Common myeloid progenitor, CD34-positive (primary cell): ENCODE measurements at regions of chr3 and their contacts with region 1.

Region 1: DNA sequence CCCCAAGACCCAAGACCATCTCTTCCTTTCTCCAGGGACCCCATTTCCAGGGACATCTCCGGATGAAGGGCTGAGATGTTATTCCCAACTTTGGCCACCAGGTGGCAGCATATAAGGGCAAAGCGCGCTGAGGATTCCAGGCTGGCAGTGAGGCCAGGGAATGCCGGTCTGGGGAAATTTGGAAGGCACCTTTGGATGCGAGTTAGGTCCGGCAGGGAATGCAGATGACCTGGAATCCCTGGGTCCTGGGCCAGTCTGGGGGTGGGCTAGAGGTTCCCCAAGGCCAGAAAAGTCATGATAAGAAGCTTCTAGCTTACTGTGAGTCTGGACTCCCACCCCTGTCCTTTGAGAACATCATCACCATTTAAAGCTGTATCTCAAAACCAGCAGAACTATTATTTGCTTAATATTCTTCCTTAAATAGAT is 1.6 kb upstream of the CHST13 start:
- DNase-seq: peak in 2 of 3 donors; percentile 42 to 51
- H3K4me3 ChIP-seq: peak overlapping the region in 3 of 7 experiments; percentile 29 to 52 (median 47)
- H3K27ac ChIP-seq: no peak overlapping the region
- H3K4me1 ChIP-seq: peaks cover 0 to 54% (median 47%) of the 10 kb centered on the region in 4 experiments
- H3K27me3 ChIP-seq: no peaks in the 10 kb centered on the region

Region 2: GRCh38 chr3:126056681-126057546 is 465.5 kb before region 1 on chr3:
- CTCF ChIA-PET with region 1: no interaction called
- POLR2A ChIA-PET with region 1: no interaction called
- DNase-seq: no peak
- H3K4me3 ChIP-seq: no peak overlapping the region
- H3K27ac ChIP-seq: no peak overlapping the region
- H3K4me1 ChIP-seq: peaks cover 0 to 12% (median 11%) of the 10 kb centered on the region in 4 experiments
- H3K27me3 ChIP-seq: no peaks in the 10 kb centered on the region

Region 3: GRCh38 chr3:126357295-126358037 is 164.9 kb before region 1 on chr3 and contains the start of gene KLF15:
- CTCF ChIA-PET with region 1: no interaction called
- POLR2A ChIA-PET with region 1: no interaction called
- DNase-seq: peak; percentile 63 to 80 (median 76)
- H3K4me3 ChIP-seq: peak within 1 kb of the TSS; percentile 4 to 70 (median 58)
- H3K27ac ChIP-seq: no peak within 1 kb of the TSS
- H3K4me1 ChIP-seq: peaks cover 0 to 22% (median 18%) of the 10 kb centered on the region in 4 experiments
- H3K27me3 ChIP-seq: peaks cover 10 to 79% (median 35%) of the 10 kb centered on the region in 5 experiments

Region 4: DNA sequence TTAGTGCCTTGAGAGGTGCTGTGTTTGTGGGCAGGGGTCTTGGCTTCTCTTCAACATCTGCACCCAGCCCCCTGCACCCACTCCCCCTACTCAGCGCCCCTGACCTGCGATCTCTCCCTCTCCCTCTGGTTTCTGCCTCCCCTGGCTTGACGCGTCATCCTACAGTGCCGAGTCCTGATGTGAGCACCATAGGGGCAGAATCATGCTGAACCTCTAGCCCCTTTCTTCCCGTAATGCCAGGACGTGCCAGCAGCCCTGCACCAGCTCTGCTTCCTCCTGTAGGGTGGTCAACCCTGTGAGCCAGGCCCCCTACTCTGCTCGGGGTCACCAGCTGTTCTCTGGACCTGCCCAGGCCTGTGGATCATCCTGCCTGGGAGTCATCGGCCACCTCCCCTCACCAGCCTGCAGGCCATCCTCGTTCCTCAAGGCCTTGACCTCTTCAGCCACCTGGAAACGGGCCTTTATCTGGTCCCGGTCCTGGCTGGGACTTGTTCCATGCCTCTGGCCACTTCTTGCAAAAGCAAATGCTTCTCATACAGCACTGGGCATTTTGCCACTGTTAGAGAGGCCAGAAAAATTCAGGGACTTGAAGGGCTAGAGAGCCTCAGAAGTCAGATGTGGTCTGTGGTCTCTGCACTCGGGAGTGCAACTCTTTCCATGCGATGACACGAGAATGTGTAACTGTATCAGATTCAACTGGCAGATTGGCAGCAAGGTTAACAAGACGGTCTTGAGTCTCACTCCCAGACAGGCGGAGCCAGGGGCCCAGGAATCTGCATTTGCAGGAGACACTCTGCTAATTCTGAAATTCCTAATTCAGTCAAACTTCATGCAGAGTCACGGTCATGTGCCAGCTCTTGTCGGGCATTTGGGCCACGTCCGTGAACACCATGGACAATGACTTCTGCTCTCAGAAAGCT is 148.4 kb before region 1 on chr3:
- CTCF ChIA-PET with region 1: no interaction called
- POLR2A ChIA-PET with region 1: no interaction called
- DNase-seq: no peak
- H3K4me3 ChIP-seq: no peak overlapping the region
- H3K27ac ChIP-seq: no peak overlapping the region
- H3K4me1 ChIP-seq: peaks cover 0 to 7% (median under 1%) of the 10 kb centered on the region in 4 experiments
- H3K27me3 ChIP-seq: peaks cover 0 to 3% (median 0%) of the 10 kb centered on the region in 5 experiments

Region 5: DNA sequence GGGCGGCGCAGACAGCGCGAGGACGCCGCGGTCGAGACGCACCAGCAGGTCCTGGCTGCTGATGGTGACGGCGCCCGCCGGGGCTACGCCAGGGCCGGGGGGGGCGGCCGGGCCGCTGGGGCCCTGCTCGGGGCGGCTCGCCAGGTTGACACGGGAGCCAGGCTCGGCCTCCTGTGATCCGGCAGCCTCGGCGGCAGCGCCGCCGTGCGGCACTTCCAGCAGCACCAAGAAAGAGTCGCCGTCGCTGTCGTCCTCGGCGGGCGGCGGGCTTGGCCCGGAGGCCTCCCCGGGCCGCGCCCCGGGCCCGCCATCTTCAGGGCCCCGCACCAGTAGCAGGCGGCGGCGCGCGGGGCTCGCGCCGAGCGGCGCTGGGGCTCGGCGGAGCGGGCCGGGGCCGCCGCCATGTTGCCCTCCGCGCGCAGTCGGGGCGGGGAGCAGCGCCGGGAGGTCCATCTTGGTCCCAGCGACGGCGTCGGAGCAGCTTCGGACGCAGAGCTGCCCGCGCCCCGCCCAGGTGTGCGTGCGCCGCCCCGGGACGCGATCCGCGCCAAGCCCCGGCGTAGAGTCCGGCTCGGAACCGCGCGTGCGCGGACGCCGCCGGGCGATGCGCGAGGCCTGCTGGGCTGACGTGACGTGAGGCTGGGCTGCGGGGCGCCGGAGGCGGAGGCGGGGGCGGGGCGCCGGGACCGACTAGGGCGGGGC is 46.8 kb before region 1 on chr3 and contains the start of gene ZXDC:
- CTCF ChIA-PET with region 1: interaction called, 11 read pairs
- POLR2A ChIA-PET with region 1: no interaction called
- DNase-seq: peak; percentile 88 to 92 (median 92)
- H3K4me3 ChIP-seq: peak within 1 kb of the TSS; percentile 54 to 89 (median 77)
- H3K27ac ChIP-seq: peak within 1 kb of the TSS; percentile 50 to 73
- H3K4me1 ChIP-seq: peaks cover 25 to 44% (median 43%) of the 10 kb centered on the region in 4 experiments
- H3K27me3 ChIP-seq: no peaks in the 10 kb centered on the region

Region 6: GRCh38 chr3:126509597-126510307 is 12.6 kb before region 1 on chr3:
- CTCF ChIA-PET with region 1: interaction called, 15 read pairs
- POLR2A ChIA-PET with region 1: no interaction called
- DNase-seq: no peak
- H3K4me3 ChIP-seq: no peak overlapping the region
- H3K27ac ChIP-seq: no peak overlapping the region
- H3K4me1 ChIP-seq: peaks cover 1 to 15% (median 3%) of the 10 kb centered on the region in 4 experiments
- H3K27me3 ChIP-seq: no peaks in the 10 kb centered on the region

Region 7: GRCh38 chr3:126537730-126538281 is 15.4 kb after region 1 on chr3:
- CTCF ChIA-PET with region 1: interaction called, 21 read pairs
- POLR2A ChIA-PET with region 1: interaction called, 5 read pairs
- DNase-seq: no peak
- H3K4me3 ChIP-seq: no peak overlapping the region
- H3K27ac ChIP-seq: no peak overlapping the region
- H3K4me1 ChIP-seq: peaks cover 7 to 68% (median 62%) of the 10 kb centered on the region in 4 experiments
- H3K27me3 ChIP-seq: no peaks in the 10 kb centered on the region

Region 8: GRCh38 chr3:126544596-126545281 is 22.4 kb after region 1 on chr3:
- CTCF ChIA-PET with region 1: interaction called, 21 read pairs
- POLR2A ChIA-PET with region 1: interaction called, 5 read pairs
- DNase-seq: no peak
- H3K4me3 ChIP-seq: no peak overlapping the region
- H3K27ac ChIP-seq: no peak overlapping the region
- H3K4me1 ChIP-seq: peaks cover 2 to 82% (median 72%) of the 10 kb centered on the region in 4 experiments
- H3K27me3 ChIP-seq: no peaks in the 10 kb centered on the region

Region 9: GRCh38 chr3:126551121-126552071 is 29.0 kb after region 1 on chr3:
- CTCF ChIA-PET with region 1: interaction called, 19 read pairs
- POLR2A ChIA-PET with region 1: no interaction called
- DNase-seq: peak in 2 of 3 donors; percentile 46 to 57
- H3K4me3 ChIP-seq: no peak overlapping the region
- H3K27ac ChIP-seq: no peak overlapping the region
- H3K4me1 ChIP-seq: peaks cover 0 to 40% (median 37%) of the 10 kb centered on the region in 4 experiments
- H3K27me3 ChIP-seq: no peaks in the 10 kb centered on the region

Region 10: GRCh38 chr3:126613479-126614188 is 91.3 kb after region 1 on chr3:
- CTCF ChIA-PET with region 1: interaction called, 36 read pairs
- POLR2A ChIA-PET with region 1: no interaction called
- DNase-seq: peak; percentile 38 to 55 (median 53)
- H3K4me3 ChIP-seq: no peak overlapping the region
- H3K27ac ChIP-seq: no peak overlapping the region
- H3K4me1 ChIP-seq: peaks cover 0 to 18% (median 14%) of the 10 kb centered on the region in 4 experiments
- H3K27me3 ChIP-seq: no peaks in the 10 kb centered on the region

Region 11: DNA sequence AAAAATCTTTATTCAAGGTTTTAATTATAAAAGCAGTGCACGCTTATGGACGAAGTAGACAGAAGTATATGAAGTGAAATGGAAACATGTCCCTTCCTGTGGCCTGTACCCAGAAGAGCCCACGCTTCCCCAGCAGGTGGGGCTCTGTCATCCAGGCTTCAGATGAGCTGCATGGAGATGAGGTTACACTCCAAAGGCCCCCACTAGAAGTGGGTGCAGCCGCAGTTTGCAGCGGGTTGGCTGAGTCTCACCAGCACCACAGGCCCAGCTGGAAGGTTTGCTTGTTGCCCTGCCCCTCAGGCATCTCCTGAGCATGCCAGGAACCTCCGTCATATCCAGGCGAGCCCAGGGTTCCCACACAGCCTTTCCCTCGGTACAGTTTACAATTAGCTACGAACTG is 732.4 kb after region 1 on chr3:
- CTCF ChIA-PET with region 1: no interaction called
- POLR2A ChIA-PET with region 1: no interaction called
- DNase-seq: peak in 1 of 3 donors; percentile 3
- H3K4me3 ChIP-seq: no peak overlapping the region
- H3K27ac ChIP-seq: no peak overlapping the region
- H3K4me1 ChIP-seq: no peaks in the 10 kb centered on the region
- H3K27me3 ChIP-seq: peaks cover 0 to 13% (median 6%) of the 10 kb centered on the region in 5 experiments